ENCODE measurements at regions of chr1 and their contacts with region 1.

Region 1: DNA sequence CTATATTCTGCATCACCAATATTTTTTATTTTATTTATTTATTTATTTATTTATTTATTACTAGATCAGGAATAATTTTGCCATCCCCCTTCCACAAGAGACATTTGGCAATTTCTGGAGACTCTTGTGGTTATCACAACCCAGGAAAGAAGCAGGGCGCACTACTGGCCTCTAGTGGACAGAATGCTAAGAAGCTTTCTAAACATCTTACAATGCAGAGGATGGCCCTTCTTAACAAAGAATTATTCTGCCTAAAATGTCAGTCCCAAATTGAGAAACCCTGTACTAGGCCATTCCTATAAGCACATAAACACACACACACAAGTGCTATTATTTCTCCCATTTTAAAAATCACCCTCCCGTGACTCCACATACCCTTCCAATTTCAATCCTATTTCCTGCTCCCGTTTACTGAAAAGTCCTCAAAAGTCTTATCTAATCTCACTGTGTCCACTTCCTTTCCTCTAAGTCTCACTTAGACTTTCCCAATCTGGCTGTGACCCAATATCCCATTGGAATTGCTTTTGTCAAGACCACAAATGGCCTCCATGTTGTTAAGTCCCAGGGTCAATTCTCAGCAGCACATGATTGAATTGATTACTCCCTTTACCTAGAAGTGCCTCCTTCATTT is 43.7 kb upstream of the RNF11 start:
- DNase-seq: peak; percentile 17 to 55 (median 18)
- H3K4me3 ChIP-seq: no peak overlapping the region
- H3K4me3 Mint-ChIP-seq: no peak overlapping the region
- H3K27ac ChIP-seq: no peak overlapping the region
- H3K27ac Mint-ChIP-seq: no peak overlapping the region
- H3K4me1 ChIP-seq: no peaks in the 10 kb centered on the region
- H3K4me1 Mint-ChIP-seq: no peaks in the 10 kb centered on the region
- H3K27me3 ChIP-seq: no peaks in the 10 kb centered on the region
- H3K27me3 Mint-ChIP-seq: peaks cover 1 to 6% of the 10 kb centered on the region in 2 donors

Region 2: GRCh38 chr1:50774759-50775351 is 417.5 kb before region 1 on chr1:
- CTCF ChIA-PET with region 1: interaction called, 39 read pairs
- POLR2A ChIA-PET with region 1: no interaction called
- DNase-seq: peak in 2 of 5 donors; percentile 19 to 24
- H3K4me3 ChIP-seq: no peak overlapping the region
- H3K4me3 Mint-ChIP-seq: no peak overlapping the region
- H3K27ac ChIP-seq: no peak overlapping the region
- H3K27ac Mint-ChIP-seq: no peak overlapping the region
- H3K4me1 ChIP-seq: no peaks in the 10 kb centered on the region
- H3K4me1 Mint-ChIP-seq: peaks cover 2 to 20% (median 18%) of the 10 kb centered on the region in 3 donors
- H3K27me3 ChIP-seq: no peaks in the 10 kb centered on the region
- H3K27me3 Mint-ChIP-seq: no peaks in the 10 kb centered on the region

Region 3: GRCh38 chr1:50929376-50929958 is 262.9 kb before region 1 on chr1:
- CTCF ChIA-PET with region 1: interaction called, 14 read pairs
- POLR2A ChIA-PET with region 1: no interaction called
- DNase-seq: peak in 1 of 5 donors; percentile 17
- H3K4me3 ChIP-seq: no peak overlapping the region
- H3K4me3 Mint-ChIP-seq: no peak overlapping the region
- H3K27ac ChIP-seq: no peak overlapping the region
- H3K27ac Mint-ChIP-seq: no peak overlapping the region
- H3K4me1 ChIP-seq: no peaks in the 10 kb centered on the region
- H3K4me1 Mint-ChIP-seq: peaks cover 30 to 43% (median 40%) of the 10 kb centered on the region in 3 donors
- H3K27me3 ChIP-seq: no peaks in the 10 kb centered on the region
- H3K27me3 Mint-ChIP-seq: no peaks in the 10 kb centered on the region

Region 4: DNA sequence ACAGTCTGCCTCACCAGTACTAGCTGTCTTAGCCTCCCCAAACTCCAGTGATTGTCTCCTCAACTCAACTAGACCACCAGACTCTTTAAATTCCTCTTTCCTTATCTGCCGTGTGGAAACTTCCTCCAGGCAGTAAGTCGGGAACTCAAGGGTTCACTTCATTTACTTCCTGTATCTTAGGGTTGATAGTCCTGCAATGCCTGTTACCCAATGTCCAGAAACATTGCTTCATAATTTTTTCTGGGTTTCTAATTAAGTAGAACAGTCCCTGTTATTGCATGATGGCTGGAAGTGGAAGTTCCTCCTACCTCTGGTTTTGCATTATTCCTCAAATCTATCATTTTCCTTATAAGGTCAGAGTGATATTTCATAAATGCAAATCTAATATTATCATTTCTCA is 17.1 kb before region 1 on chr1:
- CTCF ChIA-PET with region 1: interaction called, 11 read pairs
- POLR2A ChIA-PET with region 1: no interaction called
- DNase-seq: no peak
- H3K4me3 ChIP-seq: no peak overlapping the region
- H3K4me3 Mint-ChIP-seq: no peak overlapping the region
- H3K27ac ChIP-seq: no peak overlapping the region
- H3K27ac Mint-ChIP-seq: no peak overlapping the region
- H3K4me1 ChIP-seq: no peaks in the 10 kb centered on the region
- H3K4me1 Mint-ChIP-seq: peaks cover 0 to 5% (median 4%) of the 10 kb centered on the region in 3 donors
- H3K27me3 ChIP-seq: no peaks in the 10 kb centered on the region
- H3K27me3 Mint-ChIP-seq: peaks cover 4 to 64% of the 10 kb centered on the region in 2 donors

Region 5: GRCh38 chr1:51214615-51215131 is 22.3 kb after region 1 on chr1:
- CTCF ChIA-PET with region 1: no interaction called
- POLR2A ChIA-PET with region 1: no interaction called
- DNase-seq: no peak
- H3K4me3 ChIP-seq: no peak overlapping the region
- H3K4me3 Mint-ChIP-seq: peak overlapping the region in 3 of 7 donors; percentile 2 to 28 (median 3)
- H3K27ac ChIP-seq: no peak overlapping the region
- H3K27ac Mint-ChIP-seq: peak overlapping the region; percentile 1 to 73 (median 44)
- H3K4me1 ChIP-seq: no peaks in the 10 kb centered on the region
- H3K4me1 Mint-ChIP-seq: peaks cover 17 to 20% (median 19%) of the 10 kb centered on the region in 3 donors
- H3K27me3 ChIP-seq: no peaks in the 10 kb centered on the region
- H3K27me3 Mint-ChIP-seq: peaks cover 0 to 3% of the 10 kb centered on the region in 2 donors

Region 6: GRCh38 chr1:51235673-51236530 is 43.6 kb after region 1 on chr1 and contains the start of gene RNF11:
- CTCF ChIA-PET with region 1: interaction called, 10 read pairs
- POLR2A ChIA-PET with region 1: interaction called, 3 read pairs
- DNase-seq: peak; percentile 89 to 94 (median 91)
- H3K4me3 ChIP-seq: peak within 1 kb of the TSS; percentile 63
- H3K4me3 Mint-ChIP-seq: peak within 1 kb of the TSS; percentile 92 to 99 (median 98)
- H3K27ac ChIP-seq: peak within 1 kb of the TSS; percentile 91
- H3K27ac Mint-ChIP-seq: peak within 1 kb of the TSS; percentile 93 to 100 (median 99)
- H3K4me1 ChIP-seq: peaks cover 48% of the 10 kb centered on the region
- H3K4me1 Mint-ChIP-seq: peaks cover 14 to 33% (median 15%) of the 10 kb centered on the region in 3 donors
- H3K27me3 ChIP-seq: no peaks in the 10 kb centered on the region
- H3K27me3 Mint-ChIP-seq: no peaks in the 10 kb centered on the region
- total RNA-seq, gene RNF11: 37.4 to 40.1 TPM

Measured in CD8-positive, alpha-beta memory T cell (primary cell).